Lower leg skin (tissue), 4 donors: ENCODE measurements at regions of chr13 and their contacts with region 1.

Region 1: DNA sequence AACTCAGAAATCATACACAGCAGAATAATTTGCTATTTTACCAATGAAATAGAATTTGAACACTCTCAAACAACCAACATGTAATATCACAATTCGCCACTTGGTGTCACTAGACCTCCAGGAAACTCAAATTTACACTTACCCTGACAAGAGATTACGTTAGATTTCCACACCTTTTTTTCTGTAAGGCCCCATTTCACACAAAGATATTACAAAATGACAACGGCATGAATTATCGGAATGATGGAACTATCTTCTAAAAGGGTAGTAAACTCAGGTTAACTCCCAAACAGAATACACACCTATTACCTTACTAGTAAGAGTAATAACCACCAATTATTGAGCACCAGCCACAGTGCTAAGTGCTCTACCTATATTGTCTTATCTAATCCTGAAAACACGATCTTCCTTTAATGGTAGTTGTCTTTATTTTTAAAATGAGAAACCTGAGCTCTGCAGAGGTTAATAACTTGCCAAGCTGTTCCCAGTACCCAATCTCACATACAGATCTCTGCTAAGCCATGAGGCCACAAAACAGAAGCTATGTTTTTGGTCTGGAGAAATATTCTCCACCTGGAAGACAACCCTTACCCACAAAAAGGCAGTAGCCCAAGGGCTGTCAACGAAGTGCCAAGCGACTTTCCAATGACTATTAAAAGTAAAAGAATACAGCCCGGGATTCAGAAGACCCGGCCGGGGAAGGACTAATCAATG is 152.4 kb downstream of the DCLK1 start:
- DNase-seq: peak in 1 of 2 donors; percentile 62
- H3K4me3 ChIP-seq: no peak overlapping the region
- CTCF ChIP-seq: no peak
- POLR2A ChIP-seq: no peak

Region 2: GRCh38 chr13:36014763-36015162 is 36.0 kb after region 1 on chr13:
- intact Hi-C with region 1: no loop called
- DNase-seq: no peak
- H3K4me3 ChIP-seq: no peak overlapping the region
- CTCF ChIP-seq: no peak
- POLR2A ChIP-seq: no peak

Region 3: GRCh38 chr13:36057029-36057428 is 78.3 kb after region 1 on chr13:
- intact Hi-C with region 1: no loop called
- DNase-seq: no peak
- H3K4me3 ChIP-seq: no peak overlapping the region
- CTCF ChIP-seq: no peak
- POLR2A ChIP-seq: no peak

Region 4: DNA sequence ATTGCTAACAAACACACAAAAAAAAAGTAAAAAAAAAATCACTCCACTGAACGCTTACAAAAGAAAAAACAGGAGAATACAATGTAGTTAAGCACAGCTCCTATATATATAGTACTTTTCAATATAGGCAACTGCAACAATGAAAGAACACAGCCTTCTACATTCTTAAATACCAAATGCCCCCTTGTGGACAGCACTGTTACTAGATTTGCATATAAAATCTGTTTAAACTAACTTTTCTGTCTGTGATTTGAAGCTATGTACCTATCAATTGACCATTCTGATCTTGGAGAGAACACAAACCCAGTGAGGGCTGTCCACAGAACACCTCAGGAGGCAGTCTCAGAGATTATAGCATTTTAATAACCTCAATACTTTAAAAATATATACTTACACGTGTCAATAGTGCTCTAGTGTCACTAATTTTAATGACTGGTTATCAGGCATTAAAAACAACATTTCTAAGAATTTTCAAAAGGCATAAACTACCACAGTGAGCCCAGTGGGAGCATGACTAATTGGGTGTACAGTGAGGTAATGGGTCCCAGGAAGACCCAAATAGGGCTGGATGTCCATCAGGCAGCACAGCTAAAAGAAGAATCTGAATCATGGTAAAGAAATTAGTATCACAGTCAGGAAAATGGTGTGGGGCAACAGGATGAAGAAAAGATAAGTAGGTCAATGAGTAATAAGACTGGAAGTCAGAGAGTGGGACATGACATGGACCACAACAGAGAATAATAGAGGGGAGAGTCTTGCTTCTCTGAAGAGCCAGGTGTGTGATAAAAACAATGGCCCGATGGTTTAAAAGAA is 296.6 kb after region 1 on chr13:
- intact Hi-C with region 1: loop called (anchors 5 kb)
- DNase-seq: no peak
- H3K4me3 ChIP-seq: no peak overlapping the region
- CTCF ChIP-seq: no peak
- POLR2A ChIP-seq: no peak